Mammary epithelial cell (primary cell): ENCODE measurements at regions of chr2 and their contacts with region 1.

Region 1: GRCh38 chr2:60550178-60550983 is 3.1 kb downstream of the BCL11A start:
- DNase-seq: peak; percentile 81
- H3K4me3 ChIP-seq: peak overlapping the region; percentile 81 to 89 (median 83)
- H3K27ac ChIP-seq: peak overlapping the region; percentile 16
- H3K4me1 ChIP-seq: peaks cover 27% of the 10 kb centered on the region
- H3K27me3 ChIP-seq: peaks cover 4% of the 10 kb centered on the region
- CTCF ChIP-seq: peak; percentile 65 to 86

Region 2: GRCh38 chr2:58686776-58687175 is 1863.6 kb before region 1 on chr2:
- CTCF ChIA-PET with region 1: no interaction called
- dilution Hi-C with region 1: no loop called
- in situ Hi-C with region 1: no loop called
- intact Hi-C with region 1: loop called (anchors 5 kb)
- DNase-seq: no peak
- H3K4me3 ChIP-seq: no peak overlapping the region
- H3K27ac ChIP-seq: no peak overlapping the region
- H3K4me1 ChIP-seq: no peaks in the 10 kb centered on the region
- H3K27me3 ChIP-seq: no peaks in the 10 kb centered on the region
- CTCF ChIP-seq: no peak

Region 3: DNA sequence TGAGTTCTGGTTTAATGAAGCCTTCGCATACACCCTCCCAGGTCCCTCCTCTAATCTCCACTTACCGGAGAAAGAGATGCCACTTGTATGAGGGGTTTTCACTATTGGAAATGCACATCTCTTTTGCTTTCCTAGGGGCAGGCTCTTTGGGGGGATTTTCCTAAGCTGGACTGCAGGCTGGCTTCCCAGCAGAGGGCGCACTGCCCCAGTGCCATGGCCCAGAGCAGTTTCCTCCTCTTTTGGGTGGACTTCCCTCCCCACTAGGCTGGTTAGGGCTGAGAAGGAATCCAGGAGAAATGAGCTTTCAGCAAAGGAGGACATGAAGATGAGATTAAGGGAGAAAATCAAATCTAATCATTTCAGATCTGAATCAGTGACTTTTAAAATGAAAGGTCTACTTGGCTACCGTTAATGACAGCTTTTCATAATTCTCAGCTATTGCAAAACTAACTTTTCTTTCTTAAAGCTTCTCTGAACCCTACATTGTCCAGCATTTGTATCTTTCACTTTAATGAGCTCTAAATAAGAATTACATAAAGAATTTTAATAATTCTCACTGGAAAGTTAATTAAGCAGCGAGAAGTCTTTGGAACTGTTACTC is 1525.1 kb before region 1 on chr2:
- CTCF ChIA-PET with region 1: interaction called, 15 read pairs
- dilution Hi-C with region 1: no loop called
- in situ Hi-C with region 1: no loop called
- intact Hi-C with region 1: loop called (anchors 2 kb)
- DNase-seq: peak; percentile 1
- H3K4me3 ChIP-seq: no peak overlapping the region
- H3K27ac ChIP-seq: no peak overlapping the region
- H3K4me1 ChIP-seq: no peaks in the 10 kb centered on the region
- H3K27me3 ChIP-seq: no peaks in the 10 kb centered on the region
- CTCF ChIP-seq: peak; percentile 43 to 82

Region 4: DNA sequence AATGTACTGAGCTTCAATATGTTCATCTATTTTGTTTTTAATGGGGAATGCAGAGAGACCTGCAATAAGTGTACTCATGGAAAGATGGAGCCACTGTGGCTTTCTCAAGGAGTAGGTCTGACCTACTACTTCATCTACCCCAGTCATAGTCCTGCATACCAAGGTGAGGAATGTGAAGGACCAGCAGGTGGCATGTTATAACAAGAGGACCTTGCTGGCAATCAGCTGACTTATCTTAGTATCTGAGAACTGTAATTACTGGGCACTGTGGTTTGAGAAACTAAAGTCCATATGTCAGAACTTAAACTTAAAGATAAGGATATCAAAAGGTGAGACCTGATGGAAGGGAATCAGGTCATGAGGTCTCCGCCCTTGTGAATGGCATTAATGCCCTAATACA is 1101.1 kb before region 1 on chr2:
- CTCF ChIA-PET with region 1: no interaction called
- dilution Hi-C with region 1: no loop called
- in situ Hi-C with region 1: no loop called
- intact Hi-C with region 1: loop called (anchors 5 kb)
- DNase-seq: peak; percentile 19
- H3K4me3 ChIP-seq: no peak overlapping the region
- H3K27ac ChIP-seq: no peak overlapping the region
- H3K4me1 ChIP-seq: no peaks in the 10 kb centered on the region
- H3K27me3 ChIP-seq: no peaks in the 10 kb centered on the region
- CTCF ChIP-seq: no peak

Region 5: GRCh38 chr2:60260639-60261296 is 289.6 kb before region 1 on chr2:
- CTCF ChIA-PET with region 1: interaction called, 3 read pairs
- dilution Hi-C with region 1: no loop called
- in situ Hi-C with region 1: no loop called
- intact Hi-C with region 1: loop called (anchors 5 kb)
- DNase-seq: peak; percentile 82
- H3K4me3 ChIP-seq: no peak overlapping the region
- H3K27ac ChIP-seq: peak overlapping the region; percentile 23
- H3K4me1 ChIP-seq: peaks cover 17% of the 10 kb centered on the region
- H3K27me3 ChIP-seq: no peaks in the 10 kb centered on the region
- CTCF ChIP-seq: no peak

Region 6: DNA sequence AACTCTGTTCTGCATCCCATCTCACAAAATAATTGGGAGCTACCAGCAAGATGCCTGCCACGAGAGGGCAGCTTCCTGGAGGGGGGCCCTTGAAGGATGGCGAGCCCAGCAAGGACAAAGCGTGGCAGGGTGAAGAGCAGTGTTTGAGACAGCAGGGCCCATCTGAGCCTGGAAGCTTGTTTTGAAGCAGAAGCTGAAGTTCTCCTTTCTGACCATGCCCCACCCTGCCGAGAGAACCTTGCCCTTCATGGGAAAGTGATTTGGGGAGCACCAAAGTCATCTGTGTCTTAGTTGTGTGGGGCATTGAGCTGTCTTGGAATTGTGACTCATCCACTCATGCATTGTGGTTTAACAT is 213.3 kb before region 1 on chr2:
- CTCF ChIA-PET with region 1: no interaction called
- dilution Hi-C with region 1: no loop called
- in situ Hi-C with region 1: no loop called
- intact Hi-C with region 1: loop called (anchors 2 kb)
- DNase-seq: no peak
- H3K4me3 ChIP-seq: no peak overlapping the region
- H3K27ac ChIP-seq: no peak overlapping the region
- H3K4me1 ChIP-seq: peaks cover 10% of the 10 kb centered on the region
- H3K27me3 ChIP-seq: no peaks in the 10 kb centered on the region
- CTCF ChIP-seq: no peak

Region 7: DNA sequence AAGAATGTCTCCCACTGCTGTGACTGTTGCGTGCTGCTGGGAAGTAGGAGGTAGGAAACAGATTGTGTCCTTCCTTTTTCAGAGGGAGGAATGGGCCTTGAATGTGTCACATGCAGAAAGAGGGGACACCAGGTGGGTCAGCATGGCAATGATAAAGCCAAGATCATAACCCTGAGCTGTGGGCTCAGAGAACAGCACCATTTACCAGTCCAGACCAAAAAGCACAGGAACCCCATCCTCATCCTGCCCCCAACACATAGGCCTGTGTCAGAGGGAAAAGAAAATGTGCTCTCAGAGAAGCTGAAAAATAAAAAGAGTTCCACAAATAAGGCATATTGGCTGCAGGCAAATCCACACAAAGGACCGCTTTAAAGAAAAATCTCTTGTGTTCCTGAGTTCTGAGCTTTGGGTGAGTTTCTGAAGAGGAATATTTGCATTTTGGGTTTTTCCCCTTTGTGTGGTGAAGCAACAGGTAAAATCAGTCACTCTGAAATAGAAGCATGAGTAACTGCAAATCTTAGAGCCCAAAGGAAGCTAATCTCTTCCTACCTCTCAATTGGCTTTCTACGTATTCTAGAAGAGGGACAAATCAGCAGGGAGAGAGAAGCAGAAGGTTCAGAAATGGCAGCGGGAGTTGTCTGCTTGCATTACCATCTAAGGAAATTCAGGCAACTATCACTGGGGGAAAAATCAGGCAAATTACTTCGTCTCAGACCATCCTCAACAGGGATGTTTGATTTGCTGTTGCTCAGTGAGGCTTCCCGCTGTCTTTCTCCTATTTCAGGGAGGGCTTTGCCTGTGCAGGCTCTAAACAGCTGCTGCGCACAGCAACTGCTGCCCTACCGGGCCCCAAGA is 103.7 kb before region 1 on chr2:
- CTCF ChIA-PET with region 1: no interaction called
- dilution Hi-C with region 1: no loop called
- in situ Hi-C with region 1: no loop called
- intact Hi-C with region 1: no loop called
- DNase-seq: no peak
- H3K4me3 ChIP-seq: no peak overlapping the region
- H3K27ac ChIP-seq: no peak overlapping the region
- H3K4me1 ChIP-seq: peaks cover 4% of the 10 kb centered on the region
- H3K27me3 ChIP-seq: no peaks in the 10 kb centered on the region
- CTCF ChIP-seq: no peak

Region 8: DNA sequence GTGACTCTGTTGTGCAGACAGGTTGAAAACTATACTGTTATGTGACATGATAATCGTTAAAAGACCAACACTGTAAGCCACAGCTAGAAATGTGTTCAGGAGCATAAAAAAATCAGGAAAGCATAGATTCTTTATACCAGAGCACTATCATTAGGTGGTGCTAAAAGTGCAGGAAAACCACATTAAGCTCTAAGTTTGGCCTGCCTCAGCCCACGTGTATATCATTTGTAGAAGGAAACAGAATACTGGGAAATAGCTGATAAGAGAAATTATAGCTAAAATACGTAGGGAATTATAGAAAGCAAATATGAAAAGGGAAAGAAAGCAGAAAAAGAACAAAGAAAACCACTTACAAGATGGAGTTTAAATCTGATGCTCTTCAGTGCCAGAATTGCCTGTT is 585.1 kb after region 1 on chr2:
- CTCF ChIA-PET with region 1: no interaction called
- dilution Hi-C with region 1: no loop called
- in situ Hi-C with region 1: no loop called
- intact Hi-C with region 1: no loop called
- DNase-seq: peak; percentile 19
- H3K4me3 ChIP-seq: no peak overlapping the region
- H3K27ac ChIP-seq: no peak overlapping the region
- H3K4me1 ChIP-seq: no peaks in the 10 kb centered on the region
- H3K27me3 ChIP-seq: no peaks in the 10 kb centered on the region
- CTCF ChIP-seq: peak; percentile 29 to 36